ENCODE measurements at regions of chr12 and their contacts with region 1.

Region 1: DNA sequence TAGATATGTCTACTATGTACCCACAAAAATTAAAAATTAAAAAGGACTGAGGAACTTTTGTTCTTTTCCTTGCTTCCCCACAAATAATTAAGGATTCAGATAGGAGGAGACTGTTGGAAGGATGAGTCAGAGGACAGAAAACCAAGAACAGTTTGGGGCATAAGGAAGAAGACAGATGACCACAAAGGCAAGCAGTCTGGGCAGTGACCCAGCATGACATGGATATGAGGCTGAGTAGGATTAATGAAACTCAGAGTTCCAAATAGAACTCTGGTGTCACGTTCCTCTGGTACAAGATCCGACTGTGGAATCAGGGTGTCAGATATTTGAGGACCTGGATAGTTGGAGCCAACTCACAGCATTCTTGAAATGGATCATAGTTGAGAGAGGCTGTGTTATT is 89.3 kb upstream of the SLC38A4 start:
- DNase-seq: peak; percentile 92 to 96
- ATAC-seq: peak; percentile 99
- H3K4me3 ChIP-seq: no peak overlapping the region
- H3K27ac ChIP-seq: peak overlapping the region; percentile 71 to 82 (median 76)
- H3K4me1 ChIP-seq: peaks cover 16 to 27% of the 10 kb centered on the region in 2 donors
- H3K27me3 ChIP-seq: no peaks in the 10 kb centered on the region
- CTCF ChIP-seq: no peak
- POLR2A ChIP-seq: no peak

Region 2: GRCh38 chr12:46896680-46897079 is 18.4 kb before region 1 on chr12:
- in situ Hi-C with region 1: no loop called
- intact Hi-C with region 1: loop called (anchors 1 kb)
- DNase-seq: no peak
- ATAC-seq: no peak
- H3K4me3 ChIP-seq: no peak overlapping the region
- H3K27ac ChIP-seq: peak overlapping the region; percentile 20 to 70 (median 42)
- H3K4me1 ChIP-seq: peaks cover 17 to 19% of the 10 kb centered on the region in 2 donors
- H3K27me3 ChIP-seq: no peaks in the 10 kb centered on the region
- CTCF ChIP-seq: no peak
- POLR2A ChIP-seq: no peak

Measured in gastrocnemius medialis (tissue), 4 donors.